ENCODE measurements at regions of chr2 and their contacts with region 1.

Region 1: GRCh38 chr2:207166039-207166348 is 246 bp upstream of the KLF7 start:
- DNase-seq: peak; percentile 98
- H3K4me3 Mint-ChIP-seq: peak overlapping the region; percentile 98
- H3K27ac Mint-ChIP-seq: peak overlapping the region; percentile 97
- H3K4me1 Mint-ChIP-seq: peaks cover 59% of the 10 kb centered on the region
- H3K27me3 Mint-ChIP-seq: no peaks in the 10 kb centered on the region

Region 2: DNA sequence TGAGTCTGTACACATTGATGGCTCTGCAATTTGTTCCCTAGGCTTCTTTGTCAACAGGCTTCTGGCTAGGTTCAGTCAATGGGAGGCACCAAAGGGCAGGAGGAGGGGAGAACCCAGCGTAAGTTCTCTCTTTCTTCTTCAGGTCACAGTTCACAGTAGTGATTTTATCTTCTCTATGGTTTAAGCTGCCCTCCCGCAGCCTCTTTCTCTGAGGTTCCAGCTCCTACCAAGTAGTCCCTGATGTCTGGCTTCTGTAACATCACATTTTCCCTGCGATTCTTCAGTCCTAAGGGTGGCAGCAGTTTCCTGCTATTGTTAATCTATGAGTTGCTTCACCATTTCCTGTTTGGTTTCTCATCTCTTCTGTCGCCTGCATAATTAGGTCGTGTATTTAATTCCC is 119.3 kb before region 1 on chr2:
- intact Hi-C with region 1: loop called (anchors 1 kb)
- DNase-seq: peak; percentile 6
- H3K4me3 Mint-ChIP-seq: no peak overlapping the region
- H3K27ac Mint-ChIP-seq: no peak overlapping the region
- H3K4me1 Mint-ChIP-seq: peaks cover 15% of the 10 kb centered on the region
- H3K27me3 Mint-ChIP-seq: peaks cover 2% of the 10 kb centered on the region

Region 3: GRCh38 chr2:207083361-207084110 is 82.5 kb before region 1 on chr2:
- intact Hi-C with region 1: no loop called
- DNase-seq: no peak
- H3K4me3 Mint-ChIP-seq: no peak overlapping the region
- H3K27ac Mint-ChIP-seq: no peak overlapping the region
- H3K4me1 Mint-ChIP-seq: peaks cover 12% of the 10 kb centered on the region
- H3K27me3 Mint-ChIP-seq: no peaks in the 10 kb centered on the region

Region 4: DNA sequence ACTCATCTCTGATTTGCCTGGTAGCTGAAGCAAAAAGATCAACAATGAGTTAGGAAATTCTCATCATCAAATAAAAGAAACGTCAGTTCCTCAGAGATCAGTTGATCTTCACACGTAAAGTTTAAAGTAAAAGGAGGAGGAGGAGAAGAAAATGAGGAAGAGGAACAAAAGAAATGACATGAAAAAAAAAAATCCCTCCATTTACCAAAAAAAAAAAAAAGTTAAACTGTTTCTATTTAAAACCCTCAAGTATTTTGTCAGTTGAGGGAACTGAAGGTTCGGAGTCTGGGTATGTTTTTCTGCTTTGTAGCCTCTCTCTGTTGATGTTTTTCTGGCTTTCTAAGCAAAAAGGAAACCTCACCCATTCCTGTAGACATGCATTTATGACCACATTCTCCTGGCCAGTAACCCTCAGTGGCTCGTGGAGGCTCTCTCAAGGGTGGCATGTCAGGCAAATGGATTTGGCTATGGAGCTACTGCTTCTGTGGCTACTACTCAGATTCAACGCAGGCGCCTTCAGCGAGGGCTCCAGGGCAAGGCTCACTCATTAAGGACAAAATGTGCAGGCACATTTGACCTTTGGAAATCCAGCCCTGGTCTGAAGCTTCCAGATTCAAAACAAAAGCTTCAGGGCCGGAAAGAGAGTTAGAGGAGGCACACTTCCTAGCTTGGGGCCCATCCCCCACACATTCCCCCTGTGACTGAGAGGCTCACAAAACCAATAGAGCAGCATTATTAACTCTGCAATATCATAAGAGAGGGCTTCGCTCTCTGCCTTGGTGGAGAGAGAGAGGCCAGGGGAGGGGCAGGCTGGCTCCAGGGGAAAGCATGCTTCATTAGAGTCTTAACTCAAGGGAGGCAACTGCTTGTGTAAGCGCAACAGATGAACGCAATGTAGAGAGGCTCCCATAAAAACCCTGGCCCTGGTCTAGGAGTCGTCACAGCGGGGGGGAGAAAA is 22.5 kb before region 1 on chr2:
- intact Hi-C with region 1: loop called (anchors 1 kb)
- DNase-seq: peak; percentile 46
- H3K4me3 Mint-ChIP-seq: peak overlapping the region; percentile 61
- H3K27ac Mint-ChIP-seq: peak overlapping the region; percentile 90
- H3K4me1 Mint-ChIP-seq: peaks cover 59% of the 10 kb centered on the region
- H3K27me3 Mint-ChIP-seq: peaks cover 6% of the 10 kb centered on the region

Region 5: DNA sequence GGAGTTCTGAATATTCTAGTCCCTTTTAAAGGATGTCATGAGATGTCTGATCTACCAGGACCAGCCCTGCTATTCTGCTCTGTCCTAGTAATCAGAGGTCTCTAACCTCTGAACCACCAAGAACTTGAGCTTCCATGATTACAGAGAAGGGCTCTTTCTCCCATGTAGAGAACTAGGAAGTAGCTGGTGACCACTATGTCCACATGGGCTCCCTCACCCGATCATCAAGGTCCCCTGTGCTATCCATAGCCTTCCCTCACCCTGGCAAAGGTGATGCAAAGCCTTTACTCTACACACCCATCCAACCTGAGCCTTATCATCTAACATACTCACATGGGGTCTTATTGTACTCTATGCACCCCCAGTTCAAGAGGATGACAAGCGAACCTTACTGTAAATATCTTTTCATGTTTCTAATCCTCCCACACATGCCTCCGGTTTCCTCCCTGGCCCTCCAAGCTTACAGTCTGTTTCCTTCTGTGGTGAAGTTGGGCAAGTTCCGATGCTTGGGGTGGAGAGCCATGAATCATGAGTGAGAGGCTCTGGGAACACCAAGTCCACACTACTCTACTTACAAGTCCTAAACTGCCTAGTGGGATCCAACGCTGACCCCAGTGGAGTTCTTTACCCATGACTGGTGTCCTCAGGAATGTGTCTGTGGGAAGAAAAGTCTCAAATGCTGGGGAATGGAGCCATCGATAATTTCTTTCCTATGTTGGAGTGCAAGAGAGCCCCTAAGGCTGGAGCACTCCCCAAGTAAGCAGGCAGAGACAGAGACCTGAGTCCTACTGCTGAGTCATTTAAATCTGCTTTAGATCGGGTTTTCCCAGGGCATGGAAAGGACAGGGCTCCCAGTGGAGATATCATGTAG is 73.1 kb after region 1 on chr2:
- intact Hi-C with region 1: loop called (anchors 1 kb)
- DNase-seq: no peak
- H3K4me3 Mint-ChIP-seq: peak overlapping the region; percentile 50
- H3K27ac Mint-ChIP-seq: peak overlapping the region; percentile 73
- H3K4me1 Mint-ChIP-seq: peaks cover 19% of the 10 kb centered on the region
- H3K27me3 Mint-ChIP-seq: no peaks in the 10 kb centered on the region

Region 6: DNA sequence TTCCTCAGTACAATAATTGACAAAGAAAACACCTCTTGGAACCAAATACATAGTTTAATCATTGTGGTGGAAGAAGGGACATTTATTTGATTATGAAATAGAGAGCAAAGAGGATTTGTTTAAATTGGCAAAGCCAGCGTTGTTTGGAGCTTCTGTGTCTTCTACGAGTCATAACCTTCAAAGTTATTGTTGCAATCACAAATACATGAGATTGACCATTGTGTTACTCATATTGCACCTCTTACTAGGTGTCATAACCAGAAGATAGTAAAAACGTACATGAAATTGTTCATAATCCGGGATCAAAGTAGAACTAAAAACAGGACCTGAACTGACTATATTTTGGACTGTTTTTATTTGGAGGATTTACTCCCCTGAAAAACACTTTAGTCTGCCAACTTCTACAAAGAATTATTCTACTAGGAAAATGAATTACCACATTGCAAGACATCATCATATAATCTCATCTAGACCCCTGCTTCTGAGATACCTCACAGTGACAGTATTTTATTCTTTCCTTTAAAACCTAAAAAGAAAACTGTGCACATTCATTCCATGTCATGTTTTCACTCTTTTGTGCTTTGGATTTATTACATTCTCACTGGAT is 151.5 kb after region 1 on chr2:
- intact Hi-C with region 1: loop called (anchors 1 kb)
- DNase-seq: no peak
- H3K4me3 Mint-ChIP-seq: no peak overlapping the region
- H3K27ac Mint-ChIP-seq: peak overlapping the region; percentile 33
- H3K4me1 Mint-ChIP-seq: peaks cover 50% of the 10 kb centered on the region
- H3K27me3 Mint-ChIP-seq: no peaks in the 10 kb centered on the region

Region 7: DNA sequence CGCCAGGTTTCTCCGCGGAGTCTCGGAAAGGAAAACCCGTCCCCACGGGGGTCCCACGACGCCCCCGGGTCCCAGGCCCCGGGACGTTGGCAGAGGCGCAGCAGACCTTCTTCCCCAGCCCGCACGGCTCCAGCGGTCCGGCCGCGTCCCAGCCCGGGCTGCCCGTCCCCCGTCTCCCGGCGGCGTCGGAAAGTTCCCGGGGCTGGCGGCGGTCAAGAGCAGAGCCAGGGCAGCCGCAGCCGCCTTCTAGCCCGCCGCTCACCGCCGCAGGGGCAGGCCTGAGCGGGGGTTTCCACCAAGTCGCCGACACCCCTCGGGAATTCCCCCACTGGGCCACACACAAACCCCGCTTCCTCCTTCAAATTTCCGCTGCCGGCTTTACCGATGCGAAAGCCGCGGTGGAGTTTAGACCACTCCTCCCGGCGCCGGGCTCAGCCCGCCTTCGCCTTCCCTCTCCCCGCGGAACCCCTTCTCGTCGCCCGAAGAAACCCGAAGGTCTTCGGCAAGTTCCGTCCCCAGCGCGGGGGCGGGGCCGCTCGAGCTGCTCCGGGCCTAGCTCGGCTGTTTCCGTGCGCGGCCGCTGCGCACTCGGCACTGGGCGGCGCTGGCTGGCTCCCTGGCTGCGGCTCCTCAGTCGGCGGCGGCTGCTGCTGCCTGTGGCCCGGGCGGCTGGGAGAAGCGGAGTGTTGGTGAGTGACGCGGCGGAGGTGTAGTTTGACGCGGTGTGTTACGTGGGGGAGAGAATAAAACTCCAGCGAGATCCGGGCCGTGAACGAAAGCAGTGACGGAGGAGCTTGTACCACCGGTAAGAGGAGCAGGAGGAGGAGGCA is 363.6 kb after region 1 on chr2 and contains the start of gene CREB1:
- intact Hi-C with region 1: loop called (anchors 1 kb)
- DNase-seq: peak; percentile 100
- H3K4me3 Mint-ChIP-seq: peak within 1 kb of the TSS; percentile 99
- H3K27ac Mint-ChIP-seq: peak within 1 kb of the TSS; percentile 100
- H3K4me1 Mint-ChIP-seq: peaks cover 52% of the 10 kb centered on the region
- H3K27me3 Mint-ChIP-seq: no peaks in the 10 kb centered on the region
- total RNA-seq, gene CREB1: 98.2 and 111 TPM in 2 replicates

Region 8: DNA sequence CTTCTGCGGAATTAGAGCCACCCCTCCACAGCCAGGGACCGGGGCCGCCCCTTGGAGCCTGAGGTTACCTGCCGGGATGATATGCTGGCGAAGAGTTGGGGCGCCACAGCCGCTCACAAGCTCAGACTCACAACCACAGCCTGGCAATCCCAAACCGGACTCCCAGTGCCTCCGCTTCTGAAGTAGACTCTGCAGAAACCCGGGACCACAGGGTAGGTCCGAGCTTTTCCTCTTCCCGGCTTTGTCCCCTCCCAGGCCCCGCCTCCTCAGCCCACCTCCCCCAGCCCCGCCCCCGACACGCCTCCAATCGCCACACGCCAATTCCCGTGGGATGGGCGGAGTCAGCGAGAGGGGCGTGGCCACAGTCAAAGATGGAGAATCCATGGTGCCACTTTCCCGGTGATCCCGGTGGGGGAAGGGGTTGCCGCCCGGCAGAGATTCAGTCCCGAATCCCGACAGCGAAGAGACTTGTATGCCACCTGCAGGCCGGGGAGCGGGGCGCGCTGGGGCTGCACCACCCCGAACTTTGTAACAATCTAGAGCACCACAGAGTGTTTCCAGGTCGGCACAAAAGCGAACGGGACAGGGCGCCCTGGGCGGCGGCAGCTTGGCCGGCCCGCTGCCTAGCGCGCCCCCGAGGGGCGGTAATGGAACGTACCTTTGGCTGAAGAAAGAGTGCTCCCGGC is 1089.0 kb after region 1 on chr2 and contains the start of gene IDH1:
- intact Hi-C with region 1: loop called (anchors 10 kb)
- DNase-seq: peak; percentile 88
- H3K4me3 Mint-ChIP-seq: peak within 1 kb of the TSS; percentile 99
- H3K27ac Mint-ChIP-seq: peak within 1 kb of the TSS; percentile 89
- H3K4me1 Mint-ChIP-seq: peaks cover 21% of the 10 kb centered on the region
- H3K27me3 Mint-ChIP-seq: peaks cover 2% of the 10 kb centered on the region
- total RNA-seq, gene IDH1: 23.8 and 23.9 TPM in 2 replicates